Heart right ventricle (tissue), 16 donors: ENCODE measurements at regions of chr11 and their contacts with region 1.

Region 1: GRCh38 chr11:12110201-12110713 is at the start of gene MICAL2:
- DNase-seq: peak; percentile 90 to 92
- ATAC-seq: peak; percentile 95 to 98 (median 97)
- H3K4me3 ChIP-seq: peak within 1 kb of the TSS; percentile 72 to 97 (median 89)
- H3K27ac ChIP-seq: peak within 1 kb of the TSS; percentile 42 to 89 (median 87)
- H3K4me1 ChIP-seq: peaks cover 9 to 66% (median 41%) of the 10 kb centered on the region in 9 donors
- H3K27me3 ChIP-seq: no peaks in the 10 kb centered on the region
- CTCF ChIP-seq: no peak
- total RNA-seq, gene MICAL2: 38.1 to 95.7 (median 72.7) TPM

Region 2: GRCh38 chr11:11966826-11967668 is 143.2 kb before region 1 on chr11:
- intact Hi-C with region 1: no loop called
- DNase-seq: peak; percentile 74 to 80
- ATAC-seq: peak in 7 of 8 donors; percentile 35 to 70 (median 64)
- H3K4me3 ChIP-seq: no peak overlapping the region
- H3K27ac ChIP-seq: peak overlapping the region in 2 of 10 donors; percentile 19 to 32
- H3K4me1 ChIP-seq: peaks cover 4 to 85% (median 55%) of the 10 kb centered on the region in 9 donors
- H3K27me3 ChIP-seq: no peaks in the 10 kb centered on the region
- CTCF ChIP-seq: peak; percentile 73 to 84 (median 80)

Region 3: DNA sequence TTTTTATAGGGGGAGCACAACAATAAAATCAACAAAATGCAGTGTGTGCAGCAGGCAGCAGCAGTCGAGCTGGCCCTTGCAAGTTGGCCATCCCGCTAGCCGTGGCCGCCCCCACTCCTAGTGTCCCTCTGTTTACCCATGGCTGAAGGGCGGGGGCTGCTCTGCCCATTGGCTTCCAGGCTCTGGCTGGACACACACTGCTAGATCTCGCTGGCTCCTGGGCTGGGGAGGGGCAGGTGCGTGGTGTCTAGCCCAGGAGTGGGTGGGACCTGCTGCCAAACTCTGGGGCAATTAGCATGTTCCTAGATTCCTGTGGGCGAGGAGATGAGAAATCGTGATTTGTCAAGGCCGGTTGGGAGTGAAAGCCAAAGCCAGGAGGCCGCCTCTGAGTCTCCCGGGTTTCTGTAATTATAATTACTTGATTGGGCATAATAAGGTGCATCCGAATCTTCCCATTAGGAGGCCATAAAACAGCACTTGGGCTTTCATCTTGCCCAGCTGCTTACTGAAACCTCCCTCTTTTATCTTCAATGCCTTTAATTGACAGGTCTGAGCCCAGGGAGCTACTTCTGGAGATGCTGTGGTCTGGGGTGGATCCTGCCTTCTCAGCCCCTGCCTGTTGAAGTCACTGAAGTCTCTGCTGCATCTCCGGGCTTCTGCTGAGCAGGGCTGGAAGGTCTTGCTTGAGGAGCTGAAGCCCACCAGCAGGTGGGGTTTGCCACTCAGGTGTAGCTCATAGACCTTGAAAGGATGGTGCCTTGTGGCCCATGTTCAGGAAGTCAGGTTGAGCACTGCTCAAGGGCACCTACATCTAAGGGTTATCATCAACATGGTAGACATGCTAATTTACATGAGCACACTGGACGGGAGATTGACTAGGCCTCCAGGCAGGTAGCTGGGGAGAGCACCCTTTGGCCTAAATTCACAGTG is 57.3 kb before region 1 on chr11:
- intact Hi-C with region 1: loop called in 1 of 10 experiments (anchors 10 kb)
- DNase-seq: no peak
- ATAC-seq: no peak
- H3K4me3 ChIP-seq: no peak overlapping the region
- H3K27ac ChIP-seq: peak overlapping the region in 2 of 10 donors; percentile 27 to 60
- H3K4me1 ChIP-seq: peaks cover 0 to 32% (median 15%) of the 10 kb centered on the region in 9 donors
- H3K27me3 ChIP-seq: no peaks in the 10 kb centered on the region
- CTCF ChIP-seq: no peak

Region 4: GRCh38 chr11:12087075-12088004 is 22.9 kb before region 1 on chr11:
- intact Hi-C with region 1: loop called in 1 of 10 experiments (anchors 2 kb)
- DNase-seq: no peak
- ATAC-seq: peak in 4 of 8 donors; percentile 6 to 22 (median 12)
- H3K4me3 ChIP-seq: no peak overlapping the region
- H3K27ac ChIP-seq: peak overlapping the region; percentile 58 to 90 (median 86)
- H3K4me1 ChIP-seq: peaks cover 35 to 76% (median 72%) of the 10 kb centered on the region in 9 donors
- H3K27me3 ChIP-seq: no peaks in the 10 kb centered on the region
- CTCF ChIP-seq: no peak